ENCODE measurements at regions of chr9 and their contacts with region 1.

Region 1: GRCh38 chr9:6305954-6306563 is 22.1 kb upstream of the TPD52L3 start:
- DNase-seq: no peak
- ATAC-seq: peak in 6 of 8 donors; percentile 48 to 79 (median 71)
- H3K4me3 ChIP-seq: no peak overlapping the region
- H3K27ac ChIP-seq: no peak overlapping the region
- H3K4me1 ChIP-seq: no peaks in the 10 kb centered on the region
- H3K27me3 ChIP-seq: peaks cover 0 to 13% (median 2%) of the 10 kb centered on the region in 7 donors
- CTCF ChIP-seq: peak; percentile 28 to 81 (median 70)

Region 2: GRCh38 chr9:5886114-5886939 is 419.7 kb before region 1 on chr9:
- intact Hi-C with region 1: loop called in 8 of 10 experiments (anchors 2 to 10 kb)
- DNase-seq: peak; percentile 68
- ATAC-seq: peak; percentile 68 to 90 (median 88)
- H3K4me3 ChIP-seq: no peak overlapping the region
- H3K27ac ChIP-seq: no peak overlapping the region
- H3K4me1 ChIP-seq: no peaks in the 10 kb centered on the region
- H3K27me3 ChIP-seq: no peaks in the 10 kb centered on the region
- CTCF ChIP-seq: peak; percentile 64 to 94 (median 89)

Region 3: GRCh38 chr9:6055213-6055612 is 250.8 kb before region 1 on chr9:
- intact Hi-C with region 1: loop called in 8 of 10 experiments (anchors 2 to 10 kb)
- DNase-seq: peak in 1 of 2 donors; percentile 32
- ATAC-seq: peak in 7 of 8 donors; percentile 34 to 81 (median 64)
- H3K4me3 ChIP-seq: no peak overlapping the region
- H3K27ac ChIP-seq: no peak overlapping the region
- H3K4me1 ChIP-seq: peaks cover 0 to 5% (median 0%) of the 10 kb centered on the region in 9 donors
- H3K27me3 ChIP-seq: peaks cover 0 to under 1% (median 0%) of the 10 kb centered on the region in 7 donors
- CTCF ChIP-seq: peak; percentile 10 to 62 (median 58)

Region 4: DNA sequence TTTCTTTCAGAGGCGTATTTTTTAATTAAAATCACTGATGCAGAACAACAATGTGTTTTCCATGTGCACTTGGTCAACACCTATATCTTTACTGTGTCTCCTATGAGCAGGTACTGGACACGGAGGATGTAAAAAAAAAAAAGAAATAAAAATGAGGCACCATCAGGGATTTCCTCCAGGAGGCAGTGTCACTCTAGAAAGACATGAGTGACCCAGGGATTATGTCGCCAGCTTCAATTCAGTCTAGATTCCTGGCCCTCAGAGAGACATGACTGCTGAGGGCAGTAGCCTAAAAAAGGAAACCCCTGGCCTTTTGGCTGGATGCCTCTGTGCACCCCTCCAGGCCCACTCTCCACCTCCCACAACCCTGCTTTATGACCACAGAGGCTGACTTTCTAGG is 108.7 kb before region 1 on chr9:
- intact Hi-C with region 1: loop called in 9 of 10 experiments (anchors 1 to 5 kb)
- DNase-seq: peak in 1 of 2 donors; percentile 18
- ATAC-seq: peak in 7 of 8 donors; percentile 43 to 87 (median 74)
- H3K4me3 ChIP-seq: no peak overlapping the region
- H3K27ac ChIP-seq: peak overlapping the region in 4 of 10 donors; percentile 17 to 68 (median 41)
- H3K4me1 ChIP-seq: peaks cover 0 to 30% (median 6%) of the 10 kb centered on the region in 9 donors
- H3K27me3 ChIP-seq: no peaks in the 10 kb centered on the region
- CTCF ChIP-seq: peak; percentile 42 to 78 (median 62)

Measured in heart right ventricle (tissue), 16 donors.